CD8-positive, alpha-beta T cell (primary cell): ENCODE measurements at regions of chr1 and their contacts with region 1.

Region 1: DNA sequence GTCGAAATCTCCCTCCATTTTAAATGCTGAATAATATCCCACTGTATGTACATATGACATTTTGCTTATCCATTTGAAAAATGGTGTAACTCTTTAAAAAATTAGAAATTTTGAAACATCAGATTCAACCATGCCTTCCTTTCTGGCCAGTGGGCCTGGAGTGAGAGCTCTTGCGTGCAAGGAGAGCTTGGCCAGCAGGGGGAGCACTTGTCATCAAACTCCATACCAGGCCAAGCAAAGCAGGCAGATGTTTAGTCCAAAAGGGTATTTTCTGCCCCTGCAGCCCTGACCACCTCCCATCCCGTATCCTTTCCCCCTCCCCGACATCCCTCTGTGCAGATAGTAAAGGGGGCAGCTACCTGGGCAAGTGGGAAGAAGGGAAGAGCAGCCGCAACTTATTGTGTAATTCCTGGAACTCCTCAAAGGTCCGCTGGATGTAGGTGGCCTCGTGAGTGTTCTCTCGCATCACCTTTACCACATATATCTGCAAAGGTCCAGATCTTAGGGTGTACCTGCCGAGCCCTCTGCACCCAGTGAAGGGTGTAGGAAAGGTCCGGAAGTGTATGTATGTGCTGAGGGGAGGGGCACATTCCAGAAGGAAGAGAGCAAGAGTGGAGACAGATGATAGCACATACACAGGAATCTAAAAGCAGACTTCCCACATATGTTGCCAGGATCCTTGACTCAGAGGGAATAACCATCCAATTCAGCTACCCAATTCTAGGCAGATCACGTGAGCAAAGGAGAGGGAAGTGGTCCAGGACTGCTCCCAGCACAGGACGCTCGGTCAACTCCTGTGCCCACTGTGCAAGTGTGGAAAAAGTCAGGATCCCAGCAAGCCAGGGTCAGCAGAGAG is 19.9 kb upstream of the PPP1R15B start:
- DNase-seq: peak; percentile 65 to 87 (median 80)
- ATAC-seq: peak; percentile 77
- H3K4me3 ChIP-seq: no peak overlapping the region
- H3K4me3 Mint-ChIP-seq: no peak overlapping the region
- H3K27ac ChIP-seq: no peak overlapping the region
- H3K27ac Mint-ChIP-seq: no peak overlapping the region
- H3K4me1 ChIP-seq: no peaks in the 10 kb centered on the region
- H3K4me1 Mint-ChIP-seq: no peaks in the 10 kb centered on the region
- H3K27me3 ChIP-seq: no peaks in the 10 kb centered on the region
- H3K27me3 Mint-ChIP-seq: no peaks in the 10 kb centered on the region
- CTCF ChIP-seq: peak; percentile 97

Region 2: GRCh38 chr1:204013052-204013451 is 418.5 kb before region 1 on chr1:
- CTCF ChIA-PET with region 1: no interaction called
- POLR2A ChIA-PET with region 1: no interaction called
- intact Hi-C with region 1: no loop called
- DNase-seq: no peak
- ATAC-seq: no peak
- H3K4me3 ChIP-seq: no peak overlapping the region
- H3K4me3 Mint-ChIP-seq: no peak overlapping the region
- H3K27ac ChIP-seq: no peak overlapping the region
- H3K27ac Mint-ChIP-seq: no peak overlapping the region
- H3K4me1 ChIP-seq: no peaks in the 10 kb centered on the region
- H3K4me1 Mint-ChIP-seq: no peaks in the 10 kb centered on the region
- H3K27me3 ChIP-seq: no peaks in the 10 kb centered on the region
- H3K27me3 Mint-ChIP-seq: peaks cover 2% of the 10 kb centered on the region
- CTCF ChIP-seq: no peak

Region 3: GRCh38 chr1:204417231-204417997 is 14.1 kb before region 1 on chr1:
- CTCF ChIA-PET with region 1: interaction called, 18 read pairs
- POLR2A ChIA-PET with region 1: interaction called, 3 read pairs
- intact Hi-C with region 1: no loop called
- DNase-seq: peak in 3 of 9 experiments; percentile 36 to 60 (median 51)
- ATAC-seq: no peak
- H3K4me3 ChIP-seq: no peak overlapping the region
- H3K4me3 Mint-ChIP-seq: no peak overlapping the region
- H3K27ac ChIP-seq: no peak overlapping the region
- H3K27ac Mint-ChIP-seq: no peak overlapping the region
- H3K4me1 ChIP-seq: no peaks in the 10 kb centered on the region
- H3K4me1 Mint-ChIP-seq: peaks cover 13% of the 10 kb centered on the region
- H3K27me3 ChIP-seq: no peaks in the 10 kb centered on the region
- H3K27me3 Mint-ChIP-seq: no peaks in the 10 kb centered on the region
- CTCF ChIP-seq: no peak

Region 4: GRCh38 chr1:204446370-204447111 is 15.0 kb after region 1 on chr1:
- CTCF ChIA-PET with region 1: interaction called, 134 read pairs
- POLR2A ChIA-PET with region 1: no interaction called
- intact Hi-C with region 1: no loop called
- DNase-seq: peak; percentile 58 to 86 (median 81)
- ATAC-seq: peak; percentile 98
- H3K4me3 ChIP-seq: no peak overlapping the region
- H3K4me3 Mint-ChIP-seq: no peak overlapping the region
- H3K27ac ChIP-seq: no peak overlapping the region
- H3K27ac Mint-ChIP-seq: peak overlapping the region; percentile 78
- H3K4me1 ChIP-seq: peaks cover 11% of the 10 kb centered on the region
- H3K4me1 Mint-ChIP-seq: peaks cover 8% of the 10 kb centered on the region
- H3K27me3 ChIP-seq: no peaks in the 10 kb centered on the region
- H3K27me3 Mint-ChIP-seq: no peaks in the 10 kb centered on the region
- CTCF ChIP-seq: peak; percentile 65

Region 5: DNA sequence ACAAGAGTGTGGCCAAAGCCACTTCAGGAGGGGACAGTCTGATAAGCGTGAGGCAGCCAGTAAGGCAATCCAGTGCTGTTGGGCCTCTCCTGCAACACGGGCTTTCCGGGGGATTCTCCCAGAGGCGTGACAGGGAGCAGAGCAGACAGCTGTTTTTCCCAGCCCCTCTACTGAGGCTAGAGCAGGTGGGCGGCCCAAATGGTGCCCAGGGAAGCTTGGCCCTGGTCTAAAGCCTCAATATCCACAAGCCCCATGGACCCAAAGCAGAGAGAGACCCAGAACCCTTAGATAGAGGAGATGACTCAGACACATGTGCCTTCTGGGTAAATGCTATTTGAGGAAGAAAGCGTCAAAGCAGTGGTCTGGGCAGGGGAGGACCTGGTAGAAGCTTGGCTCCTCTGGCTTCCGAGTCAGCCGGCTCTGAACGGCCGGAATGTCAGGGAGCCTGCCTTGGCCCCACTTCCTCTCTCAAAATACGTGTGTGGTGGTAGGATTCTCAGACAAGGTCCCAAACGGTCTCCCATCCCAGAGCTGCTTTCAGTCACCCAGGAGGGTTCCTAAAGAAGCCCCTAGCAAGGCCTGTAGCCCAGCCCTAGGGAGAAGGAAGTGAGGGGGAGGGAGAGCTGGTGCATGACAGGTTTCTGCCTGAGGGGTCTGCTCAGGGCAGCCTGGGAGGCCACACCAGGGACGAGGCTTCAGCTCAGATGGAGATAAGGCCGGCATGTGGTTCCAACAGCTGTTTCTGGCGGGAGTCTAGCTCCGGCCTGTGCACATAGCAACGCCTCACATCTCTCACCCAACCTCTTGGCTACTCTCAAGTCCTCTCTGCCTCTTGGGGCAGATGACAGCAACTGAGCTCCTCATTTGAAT is 34.2 kb after region 1 on chr1:
- CTCF ChIA-PET with region 1: interaction called, 20 read pairs
- POLR2A ChIA-PET with region 1: no interaction called
- intact Hi-C with region 1: no loop called
- DNase-seq: no peak
- ATAC-seq: no peak
- H3K4me3 ChIP-seq: no peak overlapping the region
- H3K4me3 Mint-ChIP-seq: no peak overlapping the region
- H3K27ac ChIP-seq: no peak overlapping the region
- H3K27ac Mint-ChIP-seq: peak overlapping the region; percentile 30
- H3K4me1 ChIP-seq: peaks cover 35% of the 10 kb centered on the region
- H3K4me1 Mint-ChIP-seq: peaks cover 45% of the 10 kb centered on the region
- H3K27me3 ChIP-seq: no peaks in the 10 kb centered on the region
- H3K27me3 Mint-ChIP-seq: no peaks in the 10 kb centered on the region
- CTCF ChIP-seq: no peak

Region 6: GRCh38 chr1:204565617-204566582 is 134.4 kb after region 1 on chr1:
- CTCF ChIA-PET with region 1: interaction called, 3 read pairs
- POLR2A ChIA-PET with region 1: no interaction called
- intact Hi-C with region 1: loop called in 1 of 2 experiments (anchors 5 kb)
- DNase-seq: peak; percentile 25 to 84 (median 55)
- ATAC-seq: peak; percentile 93
- H3K4me3 ChIP-seq: no peak overlapping the region
- H3K4me3 Mint-ChIP-seq: no peak overlapping the region
- H3K27ac ChIP-seq: peak overlapping the region in 1 of 2 experiments; percentile 9
- H3K27ac Mint-ChIP-seq: peak overlapping the region; percentile 10
- H3K4me1 ChIP-seq: peaks cover 35% of the 10 kb centered on the region
- H3K4me1 Mint-ChIP-seq: peaks cover 52% of the 10 kb centered on the region
- H3K27me3 ChIP-seq: no peaks in the 10 kb centered on the region
- H3K27me3 Mint-ChIP-seq: no peaks in the 10 kb centered on the region
- CTCF ChIP-seq: peak; percentile 70